Activated CD8-positive, alpha-beta memory T cell treated with anti-CD3 and anti-CD28 coated beads, Interleukin-2, amount 10 ng/mL, durations not matched to agents 7 days and 5 days (primary cell): ENCODE measurements at regions of chr1 and their contacts with region 1.

Region 1: DNA sequence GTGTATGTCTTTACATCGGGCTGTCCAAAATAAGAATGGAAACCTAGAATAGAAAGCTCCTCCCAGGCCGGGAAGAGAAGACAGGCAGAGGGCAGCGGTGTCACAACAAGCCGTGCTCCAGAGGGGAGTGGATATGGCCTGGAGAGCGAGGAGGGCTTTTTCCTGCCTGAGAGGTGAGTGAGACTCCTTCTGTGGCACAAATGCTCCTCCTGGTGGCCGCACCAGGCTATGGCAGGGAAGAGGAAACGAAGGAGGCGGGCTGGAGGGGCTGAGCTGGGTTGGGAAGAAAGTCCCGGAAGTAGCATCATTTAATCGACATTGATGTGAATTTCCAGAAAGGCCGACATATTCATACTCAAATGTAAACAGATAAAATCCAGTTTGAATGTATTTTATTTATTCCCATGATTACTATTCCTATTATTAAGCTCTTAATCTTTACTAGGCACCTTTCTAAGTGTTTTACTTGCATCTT is 54.7 kb downstream of the MEF2D start:
- DNase-seq: peak; percentile 86
- ATAC-seq: peak; percentile 84
- H3K4me3 Mint-ChIP-seq: no peak overlapping the region
- H3K27ac Mint-ChIP-seq: no peak overlapping the region
- H3K4me1 Mint-ChIP-seq: peaks cover 15% of the 10 kb centered on the region
- H3K27me3 Mint-ChIP-seq: peaks cover 58% of the 10 kb centered on the region

Region 2: DNA sequence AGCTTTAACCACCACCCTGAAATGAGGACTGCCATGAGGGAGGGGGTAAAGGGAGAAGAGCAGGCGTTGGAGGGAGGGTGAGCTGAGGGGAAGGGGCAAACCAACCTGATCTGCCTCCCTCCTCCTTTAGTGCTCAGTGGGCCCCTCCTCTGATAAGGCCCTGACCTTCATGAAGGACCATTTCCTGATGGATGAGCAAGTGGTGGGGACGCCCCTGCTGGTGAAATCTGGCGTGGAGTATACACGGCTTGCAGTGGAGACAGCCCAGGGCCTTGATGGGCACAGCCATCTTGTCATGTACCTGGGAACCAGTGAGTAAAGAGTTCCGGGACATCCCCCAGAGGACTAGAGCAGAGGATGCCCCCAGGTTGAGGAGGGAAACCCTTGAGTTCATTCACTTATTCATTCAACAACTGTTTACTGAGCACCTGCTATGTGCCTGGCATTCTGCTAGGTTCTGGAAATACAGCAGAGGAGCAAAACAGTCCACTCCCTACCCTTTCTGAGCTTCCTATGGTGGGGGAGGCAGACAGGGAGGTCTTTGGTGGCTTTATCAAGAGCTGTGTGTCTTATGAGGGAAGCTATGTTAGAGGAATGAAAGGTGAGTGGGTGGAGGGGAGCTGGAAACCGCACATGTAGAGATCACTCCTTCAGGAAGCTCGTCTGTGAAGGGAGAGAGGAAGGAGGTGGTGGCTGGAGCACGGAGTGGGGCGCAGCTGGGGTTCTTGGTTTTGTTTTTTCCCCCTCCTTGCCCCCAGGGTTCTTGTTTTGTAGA is 272.9 kb before region 1 on chr1:
- CTCF ChIA-PET with region 1: no interaction called
- DNase-seq: no peak
- ATAC-seq: no peak
- H3K4me3 Mint-ChIP-seq: no peak overlapping the region
- H3K27ac Mint-ChIP-seq: no peak overlapping the region
- H3K4me1 Mint-ChIP-seq: peaks cover 4% of the 10 kb centered on the region
- H3K27me3 Mint-ChIP-seq: no peaks in the 10 kb centered on the region

Region 3: DNA sequence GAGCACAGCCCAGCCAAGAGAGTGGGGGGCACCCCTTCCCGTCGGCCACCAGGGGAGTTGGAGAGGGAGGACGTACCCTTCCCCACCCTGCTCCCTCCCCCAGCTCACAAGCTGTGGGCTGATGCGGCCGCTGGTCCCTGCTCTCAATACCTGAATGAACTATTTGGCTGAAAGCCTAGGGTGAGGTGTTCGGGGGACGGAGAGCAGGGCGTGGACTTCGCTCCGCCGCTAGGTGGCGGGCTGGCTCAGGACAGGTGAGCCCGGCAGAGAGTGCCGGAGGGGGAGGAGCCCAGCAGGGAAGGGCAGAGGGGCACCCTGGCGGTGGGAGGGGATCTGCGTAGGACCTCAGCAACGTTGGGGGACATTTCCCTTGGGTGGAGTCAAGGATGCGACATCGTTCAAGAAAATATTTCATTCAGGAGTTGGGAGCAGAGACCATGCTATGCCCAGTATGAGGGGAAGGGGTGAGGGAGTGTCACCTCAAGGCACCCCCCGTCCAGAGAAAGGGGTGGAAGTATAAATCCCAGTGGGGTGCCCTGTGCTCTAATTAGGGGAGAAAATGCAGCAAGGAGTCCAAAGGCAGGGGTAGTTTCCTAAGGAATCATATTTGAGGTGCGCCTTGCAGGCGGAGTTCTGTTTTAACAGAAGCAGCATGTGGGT is 88.8 kb before region 1 on chr1:
- CTCF ChIA-PET with region 1: interaction called, 14 read pairs
- DNase-seq: peak; percentile 66
- ATAC-seq: peak; percentile 92
- H3K4me3 Mint-ChIP-seq: no peak overlapping the region
- H3K27ac Mint-ChIP-seq: no peak overlapping the region
- H3K4me1 Mint-ChIP-seq: peaks cover 6% of the 10 kb centered on the region
- H3K27me3 Mint-ChIP-seq: peaks cover 54% of the 10 kb centered on the region

Region 4: GRCh38 chr1:156407344-156407743 is 38.5 kb before region 1 on chr1:
- CTCF ChIA-PET with region 1: interaction called, 11 read pairs
- DNase-seq: no peak
- ATAC-seq: no peak
- H3K4me3 Mint-ChIP-seq: no peak overlapping the region
- H3K27ac Mint-ChIP-seq: no peak overlapping the region
- H3K4me1 Mint-ChIP-seq: no peaks in the 10 kb centered on the region
- H3K27me3 Mint-ChIP-seq: peaks cover 46% of the 10 kb centered on the region

Region 5: GRCh38 chr1:156429313-156430060 is 16.3 kb before region 1 on chr1:
- CTCF ChIA-PET with region 1: interaction called, 25 read pairs
- DNase-seq: no peak
- ATAC-seq: no peak
- H3K4me3 Mint-ChIP-seq: no peak overlapping the region
- H3K27ac Mint-ChIP-seq: no peak overlapping the region
- H3K4me1 Mint-ChIP-seq: no peaks in the 10 kb centered on the region
- H3K27me3 Mint-ChIP-seq: peaks cover 94% of the 10 kb centered on the region

Region 6: GRCh38 chr1:156456622-156457465 is 11.0 kb after region 1 on chr1:
- CTCF ChIA-PET with region 1: interaction called, 23 read pairs
- DNase-seq: peak; percentile 97
- ATAC-seq: peak; percentile 92
- H3K4me3 Mint-ChIP-seq: peak overlapping the region; percentile 86
- H3K27ac Mint-ChIP-seq: peak overlapping the region; percentile 95
- H3K4me1 Mint-ChIP-seq: peaks cover 31% of the 10 kb centered on the region
- H3K27me3 Mint-ChIP-seq: peaks cover 7% of the 10 kb centered on the region

Region 7: DNA sequence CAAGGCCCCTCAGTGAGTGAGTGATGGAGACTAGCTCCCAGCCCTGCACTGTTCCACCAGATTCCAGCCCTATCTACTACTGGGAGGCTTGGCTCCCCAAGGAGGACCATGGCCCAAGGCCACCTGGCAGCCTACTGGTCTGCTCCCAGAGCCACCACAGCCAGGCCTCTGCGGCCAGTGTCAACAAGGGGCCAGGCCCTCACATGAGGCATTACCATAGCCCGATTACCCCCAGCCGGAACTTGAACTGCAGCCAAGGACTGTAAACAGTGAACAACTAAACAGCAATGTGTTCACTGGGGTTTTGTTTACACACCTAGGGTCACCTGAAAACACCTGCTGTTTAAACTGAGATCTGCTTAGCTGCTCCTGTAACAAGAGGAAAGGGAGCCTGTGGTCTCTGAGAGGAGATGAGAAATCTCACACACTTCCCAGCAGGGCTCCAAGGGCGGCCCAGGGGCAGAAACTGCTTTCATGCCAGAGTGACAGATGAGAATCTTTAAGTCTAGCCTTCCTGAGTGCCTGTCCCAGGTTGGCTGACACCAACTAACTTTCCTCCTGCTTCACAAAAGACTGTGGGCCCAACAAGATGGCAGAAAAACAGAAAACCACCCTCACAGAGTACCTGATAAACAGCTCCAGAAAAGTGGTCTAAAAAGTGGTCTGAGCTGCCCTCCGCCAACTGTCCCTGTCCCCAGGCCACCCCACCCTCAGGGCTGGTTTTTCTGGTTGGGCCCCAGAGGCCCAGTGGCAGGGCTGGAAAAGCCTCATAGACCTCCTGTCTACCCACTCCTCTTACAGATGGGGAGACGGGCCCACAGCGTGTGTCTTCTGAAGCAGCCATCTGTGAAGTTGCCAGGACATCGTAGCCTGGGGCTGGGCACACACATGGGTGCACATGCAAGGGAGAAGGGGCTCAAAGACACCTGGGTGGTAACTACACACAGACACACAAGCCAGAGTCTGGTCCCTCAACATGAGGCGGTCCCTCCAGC is 26.0 kb after region 1 on chr1:
- CTCF ChIA-PET with region 1: no interaction called
- DNase-seq: no peak
- ATAC-seq: no peak
- H3K4me3 Mint-ChIP-seq: no peak overlapping the region
- H3K27ac Mint-ChIP-seq: no peak overlapping the region
- H3K4me1 Mint-ChIP-seq: peaks cover 37% of the 10 kb centered on the region
- H3K27me3 Mint-ChIP-seq: no peaks in the 10 kb centered on the region